Spleen (tissue), 13 donors: ENCODE measurements at regions of chr3 and their contacts with region 1.

Region 1: DNA sequence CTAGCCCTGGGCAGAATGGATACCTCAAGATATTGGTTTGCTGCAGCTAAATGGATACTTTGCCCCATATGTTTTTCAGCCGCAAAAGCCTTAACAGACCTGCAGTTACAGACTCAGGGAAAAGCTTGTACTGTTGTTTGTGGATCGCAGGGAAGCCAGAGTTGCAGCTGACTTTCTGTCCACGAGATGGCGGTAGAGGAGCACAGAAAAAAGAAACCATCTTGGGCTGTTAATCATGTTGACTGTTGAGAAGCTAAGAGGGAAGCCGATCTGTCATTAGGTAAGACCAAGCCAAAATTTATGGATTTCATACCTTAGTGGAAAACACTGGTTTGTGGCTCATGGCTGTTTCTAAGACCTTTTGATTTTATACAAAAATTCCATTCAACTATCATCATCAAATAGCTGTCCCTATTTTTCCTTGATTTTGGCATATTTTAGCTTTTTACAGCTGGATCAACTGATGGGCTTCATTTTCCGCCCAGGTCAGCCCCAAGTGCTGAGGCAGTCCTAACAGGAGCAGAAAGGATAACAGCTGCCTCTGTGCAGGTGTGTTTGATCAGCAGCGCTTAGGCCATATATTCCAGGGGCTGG is 205.7 kb upstream of the ZPLD1 start:
- DNase-seq: no peak
- H3K4me3 ChIP-seq: no peak overlapping the region
- H3K27ac ChIP-seq: no peak overlapping the region
- H3K4me1 ChIP-seq: peaks cover 0 to 43% (median 17%) of the 10 kb centered on the region in 6 donors
- H3K27me3 ChIP-seq: peaks cover 0 to 4% (median 0%) of the 10 kb centered on the region in 7 donors
- CTCF ChIP-seq: peak; percentile 87 to 95 (median 92)
- POLR2A ChIP-seq: no peak

Region 2: DNA sequence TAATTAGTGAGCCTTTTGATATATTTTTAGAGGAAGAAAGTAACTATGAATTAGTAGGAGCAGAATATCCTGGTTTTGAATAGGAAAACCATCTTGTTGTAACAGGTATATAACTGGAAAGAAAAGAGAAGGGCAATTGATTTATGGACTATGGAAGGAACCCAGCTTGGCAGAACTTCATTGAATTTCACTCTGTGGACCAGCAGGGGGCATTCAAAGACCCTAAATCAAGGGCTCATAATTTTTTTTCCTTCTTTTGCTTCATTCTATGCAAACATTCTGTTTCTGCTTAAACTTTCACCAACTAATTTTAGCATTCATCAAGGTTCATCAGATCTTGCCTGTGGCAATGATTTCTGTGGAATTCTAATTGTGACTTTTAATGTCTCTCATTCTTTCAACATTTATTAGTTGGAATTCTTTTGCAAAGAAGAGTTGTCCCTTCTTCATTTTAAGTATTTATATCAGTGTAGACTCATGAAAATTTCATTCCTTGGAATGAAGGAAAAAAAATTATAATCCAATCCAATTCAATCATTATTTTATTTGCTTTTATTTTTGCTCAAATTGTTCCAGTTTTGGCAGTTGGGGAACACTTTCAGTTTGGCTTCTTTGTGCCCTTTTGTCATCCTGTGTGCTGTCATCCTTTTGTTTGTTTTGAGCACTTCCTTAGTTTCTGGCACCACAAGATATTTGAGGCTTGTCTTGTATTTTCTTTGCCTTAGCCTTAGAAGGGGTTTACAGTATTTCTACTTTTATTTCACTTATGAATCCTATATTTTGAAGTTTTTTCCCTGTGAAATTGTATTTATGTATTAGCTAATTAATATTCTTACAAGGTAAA is 419.8 kb before region 1 on chr3:
- intact Hi-C with region 1: loop called (anchors 2 kb)
- DNase-seq: no peak
- H3K4me3 ChIP-seq: no peak overlapping the region
- H3K27ac ChIP-seq: peak overlapping the region in 5 of 8 donors; percentile 7 to 45 (median 29)
- H3K4me1 ChIP-seq: peaks cover 7 to 52% (median 22%) of the 10 kb centered on the region in 6 donors
- H3K27me3 ChIP-seq: no peaks in the 10 kb centered on the region
- CTCF ChIP-seq: peak; percentile 57 to 85 (median 77)
- POLR2A ChIP-seq: no peak

Region 3: GRCh38 chr3:102142379-102143060 is 86.6 kb before region 1 on chr3:
- intact Hi-C with region 1: no loop called
- DNase-seq: no peak
- H3K4me3 ChIP-seq: no peak overlapping the region
- H3K27ac ChIP-seq: no peak overlapping the region
- H3K4me1 ChIP-seq: no peaks in the 10 kb centered on the region
- H3K27me3 ChIP-seq: no peaks in the 10 kb centered on the region
- CTCF ChIP-seq: no peak
- POLR2A ChIP-seq: no peak

Region 4: DNA sequence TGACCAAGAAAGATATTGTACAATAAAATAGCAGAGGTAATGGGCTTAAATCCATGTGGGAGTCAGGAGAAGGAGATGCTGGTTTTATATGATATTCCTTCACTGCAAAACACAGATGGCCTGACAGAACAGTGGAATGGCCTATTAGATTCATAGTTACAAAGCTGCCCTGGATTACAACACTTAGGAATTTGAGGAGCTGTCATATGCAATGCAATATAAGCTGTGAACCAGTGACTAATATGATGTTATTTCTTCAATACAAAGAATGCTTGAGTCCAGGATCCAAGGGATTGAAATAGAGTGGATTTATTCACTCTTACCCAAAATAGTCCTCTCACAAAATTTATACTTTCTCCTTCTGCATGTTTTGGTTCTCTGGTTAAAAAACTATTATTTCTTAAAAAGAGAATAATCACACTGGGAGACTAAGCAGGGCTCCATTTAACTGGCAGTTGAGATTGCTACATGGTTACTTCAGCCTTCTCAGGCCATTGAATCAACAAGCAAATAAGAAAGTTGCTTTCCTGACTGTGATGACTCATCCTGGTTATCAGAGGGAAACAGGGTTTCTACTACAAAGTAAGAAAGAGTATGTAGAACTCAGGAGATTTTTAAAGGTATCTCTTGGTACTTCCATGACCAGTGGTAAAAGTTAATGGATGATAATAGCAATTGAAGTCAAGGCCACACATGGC is 125.8 kb after region 1 on chr3:
- intact Hi-C with region 1: no loop called
- DNase-seq: no peak
- H3K4me3 ChIP-seq: no peak overlapping the region
- H3K27ac ChIP-seq: no peak overlapping the region
- H3K4me1 ChIP-seq: no peaks in the 10 kb centered on the region
- H3K27me3 ChIP-seq: no peaks in the 10 kb centered on the region
- CTCF ChIP-seq: no peak
- POLR2A ChIP-seq: no peak

Region 5: DNA sequence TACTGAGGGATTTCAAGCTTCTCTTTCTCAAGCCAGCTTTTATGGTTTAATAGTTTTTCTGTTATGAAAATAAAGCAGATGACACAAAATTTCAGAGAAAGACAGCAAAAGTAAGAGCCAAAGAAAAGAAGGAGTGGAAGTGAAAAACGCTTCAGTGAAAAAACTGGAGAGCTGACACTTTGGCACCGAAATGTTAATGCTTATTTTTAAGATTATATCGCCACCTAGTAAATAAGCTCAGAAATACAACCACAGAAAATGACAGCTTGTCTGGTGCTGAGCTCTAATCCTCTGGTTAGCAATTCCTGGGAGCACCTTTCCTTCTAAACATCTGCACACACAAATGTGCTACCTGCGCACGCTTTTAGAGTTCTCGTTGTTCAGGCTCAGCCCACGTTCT is 307.3 kb after region 1 on chr3:
- intact Hi-C with region 1: loop called (anchors 5 kb)
- DNase-seq: no peak
- H3K4me3 ChIP-seq: no peak overlapping the region
- H3K27ac ChIP-seq: no peak overlapping the region
- H3K4me1 ChIP-seq: peaks cover 0 to 19% (median 0%) of the 10 kb centered on the region in 6 donors
- H3K27me3 ChIP-seq: peaks cover 0 to 4% (median 0%) of the 10 kb centered on the region in 7 donors
- CTCF ChIP-seq: peak in 7 of 11 experiments; percentile 30 to 50 (median 39)
- POLR2A ChIP-seq: no peak